Activated T-helper 1 cell treated with anti-CD3 and anti-CD28 coated beads, Interleukin-12 subunit alpha, Interleukin-12 subunit beta, Interleukin-2, Interleukin-4 antibody, amounts not matched to agents 30 ng/mL and 10 ng/mL and 1 ng/mL, durations not matched to agents 14 hours and 24 hours and 36 hours (primary cell): ENCODE measurements at regions of chr16 and their contacts with region 1.

Region 1: GRCh38 chr16:1474796-1475551 is at the start of gene CLCN7:
- DNase-seq: peak; percentile 89
- H3K4me3 Mint-ChIP-seq: peak within 1 kb of the TSS; percentile 83
- H3K27ac Mint-ChIP-seq: peak within 1 kb of the TSS; percentile 89
- H3K4me1 Mint-ChIP-seq: peaks cover 6% of the 10 kb centered on the region
- H3K27me3 Mint-ChIP-seq: peaks cover 2% of the 10 kb centered on the region
- total RNA-seq, gene CLCN7: 61.7 and 68.7 TPM in 2 replicates

Region 2: GRCh38 chr16:1408171-1408837 is 66.7 kb before region 1 on chr16:
- intact Hi-C with region 1: loop called (anchors 2 kb)
- DNase-seq: peak; percentile 92
- H3K4me3 Mint-ChIP-seq: peak overlapping the region; percentile 75
- H3K27ac Mint-ChIP-seq: peak overlapping the region; percentile 18
- H3K4me1 Mint-ChIP-seq: peaks cover 5% of the 10 kb centered on the region
- H3K27me3 Mint-ChIP-seq: no peaks in the 10 kb centered on the region

Region 3: GRCh38 chr16:1450218-1450617 is 24.8 kb before region 1 on chr16:
- intact Hi-C with region 1: no loop called
- DNase-seq: no peak
- H3K4me3 Mint-ChIP-seq: no peak overlapping the region
- H3K27ac Mint-ChIP-seq: no peak overlapping the region
- H3K4me1 Mint-ChIP-seq: no peaks in the 10 kb centered on the region
- H3K27me3 Mint-ChIP-seq: no peaks in the 10 kb centered on the region

Region 4: GRCh38 chr16:1492923-1493745 is 18.2 kb after region 1 on chr16 and contains the start of gene TELO2:
- intact Hi-C with region 1: loop called (anchors 1 kb)
- DNase-seq: peak; percentile 85
- H3K4me3 Mint-ChIP-seq: peak within 1 kb of the TSS; percentile 92
- H3K27ac Mint-ChIP-seq: peak within 1 kb of the TSS; percentile 98
- H3K4me1 Mint-ChIP-seq: peaks cover 8% of the 10 kb centered on the region
- H3K27me3 Mint-ChIP-seq: no peaks in the 10 kb centered on the region
- total RNA-seq, gene TELO2: 94.1 and 95.3 TPM in 2 replicates

Region 5: GRCh38 chr16:1543085-1543896 is 68.3 kb after region 1 on chr16:
- intact Hi-C with region 1: loop called (anchors 2 kb)
- DNase-seq: peak; percentile 38
- H3K4me3 Mint-ChIP-seq: peak overlapping the region; percentile 70
- H3K27ac Mint-ChIP-seq: peak overlapping the region; percentile 91
- H3K4me1 Mint-ChIP-seq: peaks cover 34% of the 10 kb centered on the region
- H3K27me3 Mint-ChIP-seq: no peaks in the 10 kb centered on the region